MCF 10A (cell line): ENCODE measurements at regions of chr12 and their contacts with region 1.

Region 1: GRCh38 chr12:66087365-66087943 is 43.1 kb downstream of the LLPH start:
- DNase-seq: peak; percentile 79
- H3K4me3 Mint-ChIP-seq: no peak overlapping the region
- H3K27ac Mint-ChIP-seq: no peak overlapping the region
- H3K4me1 Mint-ChIP-seq: peaks cover under 1% of the 10 kb centered on the region
- H3K27me3 Mint-ChIP-seq: no peaks in the 10 kb centered on the region
- CTCF ChIP-seq: peak; percentile 72

Region 2: GRCh38 chr12:65685514-65685913 is 401.9 kb before region 1 on chr12:
- CTCF ChIA-PET with region 1: interaction called, 3 read pairs
- POLR2A ChIA-PET with region 1: no interaction called
- intact Hi-C with region 1: loop called (anchors 5 kb)
- DNase-seq: peak; percentile 66
- H3K4me3 Mint-ChIP-seq: no peak overlapping the region
- H3K27ac Mint-ChIP-seq: no peak overlapping the region
- H3K4me1 Mint-ChIP-seq: peaks cover 1% of the 10 kb centered on the region
- H3K27me3 Mint-ChIP-seq: no peaks in the 10 kb centered on the region
- CTCF ChIP-seq: peak; percentile 40

Region 3: DNA sequence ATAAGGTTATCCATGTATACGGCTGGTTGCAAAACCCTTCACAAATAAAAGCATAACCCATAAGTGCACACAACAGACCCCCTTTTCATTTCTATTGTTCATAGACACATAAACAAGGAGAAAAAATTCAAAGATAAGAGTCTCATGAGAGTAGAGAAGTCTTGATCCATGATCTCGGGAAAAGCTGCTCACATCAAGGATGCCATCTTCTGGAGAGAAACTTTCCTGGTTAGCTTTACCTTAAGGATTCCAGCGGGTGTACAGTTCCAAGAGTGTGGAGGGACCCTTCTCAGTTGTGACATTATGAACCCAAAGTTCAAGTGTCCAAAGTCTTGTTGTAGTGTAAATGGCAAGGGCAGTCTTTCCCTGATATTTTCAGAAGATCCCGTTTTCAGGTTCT is 101.4 kb before region 1 on chr12:
- CTCF ChIA-PET with region 1: interaction called, 5 read pairs
- POLR2A ChIA-PET with region 1: no interaction called
- intact Hi-C with region 1: loop called (anchors 1 kb)
- DNase-seq: no peak
- H3K4me3 Mint-ChIP-seq: no peak overlapping the region
- H3K27ac Mint-ChIP-seq: no peak overlapping the region
- H3K4me1 Mint-ChIP-seq: peaks cover 5% of the 10 kb centered on the region
- H3K27me3 Mint-ChIP-seq: no peaks in the 10 kb centered on the region
- CTCF ChIP-seq: no peak

Region 4: DNA sequence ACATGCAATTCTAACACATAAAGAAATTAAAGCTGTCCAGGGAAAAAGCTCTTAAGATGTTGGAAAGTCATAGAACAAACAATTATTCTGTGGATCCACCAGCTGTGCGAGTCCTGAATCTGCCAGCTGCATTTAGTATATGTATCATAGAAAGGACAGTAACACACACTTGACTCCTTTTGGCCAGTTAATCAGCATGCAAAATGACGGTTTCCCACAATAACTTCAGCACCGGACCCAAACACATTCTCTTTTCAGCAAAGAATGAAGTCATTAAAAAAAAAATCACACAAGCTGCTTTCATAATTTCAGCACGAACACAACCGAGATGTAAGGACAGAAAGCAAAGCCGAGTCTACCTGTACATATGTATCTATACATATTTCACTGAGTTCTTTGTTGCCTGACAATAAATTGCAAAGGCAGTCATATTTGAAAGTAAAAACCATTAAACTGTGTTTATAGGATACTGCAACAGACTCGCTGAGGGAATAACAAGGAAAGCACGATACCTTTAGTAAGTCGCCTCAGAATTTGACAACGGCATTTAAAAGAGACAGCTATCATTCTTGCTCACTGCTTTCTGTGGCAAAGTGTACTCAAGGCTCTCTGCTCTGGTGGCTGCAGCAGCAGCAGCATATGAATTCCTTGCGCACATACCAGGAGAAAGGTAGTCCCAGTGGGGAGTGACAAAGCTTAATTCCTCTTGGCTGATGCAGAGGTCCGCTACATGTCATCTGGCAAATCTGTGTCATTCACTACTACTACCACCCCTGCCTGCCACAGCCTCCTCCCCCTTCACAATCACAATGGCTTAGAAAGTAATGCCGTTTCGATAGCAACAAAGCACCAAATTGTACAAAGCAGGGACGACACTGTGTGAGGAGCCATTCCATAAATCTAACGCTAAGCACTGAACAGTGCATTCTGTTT is 591.1 kb after region 1 on chr12 and contains the start of gene GRIP1:
- CTCF ChIA-PET with region 1: no interaction called
- POLR2A ChIA-PET with region 1: no interaction called
- intact Hi-C with region 1: no loop called
- DNase-seq: no peak
- H3K4me3 Mint-ChIP-seq: no peak within 1 kb of the TSS
- H3K27ac Mint-ChIP-seq: no peak within 1 kb of the TSS
- H3K4me1 Mint-ChIP-seq: no peaks in the 10 kb centered on the region
- H3K27me3 Mint-ChIP-seq: peaks cover 64% of the 10 kb centered on the region
- CTCF ChIP-seq: no peak
- total RNA-seq, gene GRIP1: 8.2 and 8.8 TPM in 2 replicates